ENCODE measurements at regions of chr12 and their contacts with region 1.

Region 1: GRCh38 chr12:57621497-57622292 is 10.5 kb downstream of the ARHGEF25 start:
- DNase-seq: peak; percentile 64 to 88
- ATAC-seq: peak; percentile 76 to 92
- H3K4me3 ChIP-seq: peak overlapping the region; percentile 53
- H3K27ac ChIP-seq: peak overlapping the region; percentile 54 to 76; a peak in 5 of 6 replicates
- H3K4me1 ChIP-seq: peaks cover 10% of the 10 kb centered on the region; the same call in 1 of the 3 replicates
- CTCF ChIP-seq: peak; percentile 96
- EP300 ChIP-seq: no peak
- POLR2A ChIP-seq: no peak
- RAD21 ChIP-seq: peak; percentile 71 to 84

Region 2: GRCh38 chr12:57404966-57405640 is 216.6 kb before region 1 on chr12:
- CTCF ChIA-PET with region 1: no interaction called
- POLR2A ChIA-PET with region 1: no interaction called
- DNase-seq: no peak
- ATAC-seq: no peak
- H3K4me3 ChIP-seq: no peak overlapping the region
- H3K27ac ChIP-seq: no peak overlapping the region
- H3K4me1 ChIP-seq: no peaks in the 10 kb centered on the region
- CTCF ChIP-seq: no peak
- EP300 ChIP-seq: no peak
- POLR2A ChIP-seq: no peak
- RAD21 ChIP-seq: no peak

Region 3: GRCh38 chr12:57590536-57591479 is 30.9 kb before region 1 on chr12 and contains the start of gene PIP4K2C:
- CTCF ChIA-PET with region 1: interaction called, 336 read pairs
- POLR2A ChIA-PET with region 1: interaction called, 4 read pairs
- DNase-seq: peak; percentile 79 to 80
- ATAC-seq: peak; percentile 87 to 94
- H3K4me3 ChIP-seq: peak within 1 kb of the TSS; percentile 94
- H3K27ac ChIP-seq: peak within 1 kb of the TSS; percentile 84 to 91
- H3K4me1 ChIP-seq: peaks cover 12% of the 10 kb centered on the region
- CTCF ChIP-seq: no peak
- EP300 ChIP-seq: no peak
- POLR2A ChIP-seq: peak; percentile 77
- RAD21 ChIP-seq: no peak
- polyA plus RNA-seq, gene PIP4K2C: 60.9 and 62.9 TPM in 2 replicates

Region 4: GRCh38 chr12:57604992-57605810 is 16.5 kb before region 1 on chr12:
- CTCF ChIA-PET with region 1: interaction called, 13 read pairs
- POLR2A ChIA-PET with region 1: interaction called, 4 read pairs
- DNase-seq: no peak
- ATAC-seq: peak; percentile 15 to 48; a peak in 4 of 6 replicates
- H3K4me3 ChIP-seq: peak overlapping the region; percentile 90
- H3K27ac ChIP-seq: peak overlapping the region; percentile 94 to 97
- H3K4me1 ChIP-seq: peaks cover 13% of the 10 kb centered on the region; the same call in 2 of the 3 replicates
- CTCF ChIP-seq: no peak
- EP300 ChIP-seq: no peak
- POLR2A ChIP-seq: no peak
- RAD21 ChIP-seq: no peak

Region 5: GRCh38 chr12:57611108-57611809 is 10.4 kb before region 1 on chr12 and contains the start of gene ARHGEF25:
- CTCF ChIA-PET with region 1: interaction called, 16 read pairs
- POLR2A ChIA-PET with region 1: interaction called, 4 read pairs
- DNase-seq: peak; percentile 48 to 84
- ATAC-seq: peak; percentile 81 to 91
- H3K4me3 ChIP-seq: peak within 1 kb of the TSS; percentile 61
- H3K27ac ChIP-seq: peak within 1 kb of the TSS; percentile 81 to 95
- H3K4me1 ChIP-seq: peaks cover 11% of the 10 kb centered on the region; the same call in 2 of the 3 replicates
- CTCF ChIP-seq: no peak
- EP300 ChIP-seq: no peak
- POLR2A ChIP-seq: peak; percentile 66
- RAD21 ChIP-seq: no peak
- polyA plus RNA-seq, gene ARHGEF25: 9.3 and 9.9 TPM in 2 replicates

Region 6: GRCh38 chr12:57905812-57906475 is 284.2 kb after region 1 on chr12:
- CTCF ChIA-PET with region 1: no interaction called
- POLR2A ChIA-PET with region 1: no interaction called
- DNase-seq: no peak
- ATAC-seq: no peak
- H3K4me3 ChIP-seq: no peak overlapping the region
- H3K27ac ChIP-seq: no peak overlapping the region
- H3K4me1 ChIP-seq: no peaks in the 10 kb centered on the region
- CTCF ChIP-seq: no peak
- EP300 ChIP-seq: no peak
- POLR2A ChIP-seq: no peak
- RAD21 ChIP-seq: no peak

Measured in A549 (cell line).